Panc1 (cell line): ENCODE measurements at regions of chr12 and their contacts with region 1.

Region 1: DNA sequence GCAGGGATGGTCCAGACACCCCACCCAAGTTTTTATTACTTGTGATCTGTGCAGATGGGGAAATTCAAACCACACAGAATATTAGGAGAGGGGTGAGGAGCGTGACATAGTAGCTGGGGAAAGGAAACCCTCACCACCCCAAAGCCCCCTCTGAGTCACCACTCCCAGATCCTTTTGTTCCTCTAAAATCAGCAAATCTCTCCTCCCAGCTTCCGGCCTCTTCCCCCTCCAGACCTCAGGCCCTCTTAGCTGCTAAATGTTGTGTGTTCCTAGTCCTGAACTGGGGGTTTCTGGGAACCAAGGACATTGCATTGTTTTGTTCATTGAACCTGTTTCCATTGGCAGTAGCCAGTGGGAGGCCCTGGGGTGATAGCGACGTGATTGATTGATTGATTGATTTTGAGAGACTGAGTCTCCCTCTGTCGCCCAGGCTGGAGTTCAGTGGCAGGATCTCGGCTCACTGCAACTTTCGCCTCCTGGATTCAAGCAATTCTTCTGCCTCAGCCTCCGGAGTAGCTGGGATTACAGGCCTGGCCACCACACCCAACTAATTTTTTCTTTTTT is 5.9 kb upstream of the ORAI1 start:
- DNase-seq: no peak
- ATAC-seq: no peak
- H3K4me3 ChIP-seq: no peak overlapping the region
- H3K27ac ChIP-seq: no peak overlapping the region
- H3K4me1 ChIP-seq: peaks cover 5% of the 10 kb centered on the region; the same call in 1 of the 2 replicates
- H3K27me3 ChIP-seq: no peaks in the 10 kb centered on the region
- CTCF ChIP-seq: no peak

Region 2: GRCh38 chr12:121499929-121500793 is 120.2 kb before region 1 on chr12:
- CTCF ChIA-PET with region 1: no interaction called
- POLR2A ChIA-PET with region 1: no interaction called
- in situ Hi-C with region 1: no loop called
- intact Hi-C with region 1: loop called (anchors 5 kb)
- DNase-seq: no peak
- ATAC-seq: peak; percentile 95
- H3K4me3 ChIP-seq: no peak overlapping the region
- H3K27ac ChIP-seq: no peak overlapping the region
- H3K4me1 ChIP-seq: no peaks in the 10 kb centered on the region
- H3K27me3 ChIP-seq: no peaks in the 10 kb centered on the region
- CTCF ChIP-seq: peak; percentile 96

Region 3: GRCh38 chr12:121560392-121561008 is 59.9 kb before region 1 on chr12:
- CTCF ChIA-PET with region 1: interaction called, 8 read pairs
- POLR2A ChIA-PET with region 1: interaction called, 13 read pairs
- in situ Hi-C with region 1: no loop called
- intact Hi-C with region 1: loop called (anchors 10 kb)
- DNase-seq: no peak
- ATAC-seq: 0 out of 2 replicates have a peak, but pooled peaks have one; percentile 42
- H3K4me3 ChIP-seq: no peak overlapping the region
- H3K27ac ChIP-seq: no peak overlapping the region
- H3K4me1 ChIP-seq: no peaks in the 10 kb centered on the region
- H3K27me3 ChIP-seq: no peaks in the 10 kb centered on the region
- CTCF ChIP-seq: no peak

Region 4: DNA sequence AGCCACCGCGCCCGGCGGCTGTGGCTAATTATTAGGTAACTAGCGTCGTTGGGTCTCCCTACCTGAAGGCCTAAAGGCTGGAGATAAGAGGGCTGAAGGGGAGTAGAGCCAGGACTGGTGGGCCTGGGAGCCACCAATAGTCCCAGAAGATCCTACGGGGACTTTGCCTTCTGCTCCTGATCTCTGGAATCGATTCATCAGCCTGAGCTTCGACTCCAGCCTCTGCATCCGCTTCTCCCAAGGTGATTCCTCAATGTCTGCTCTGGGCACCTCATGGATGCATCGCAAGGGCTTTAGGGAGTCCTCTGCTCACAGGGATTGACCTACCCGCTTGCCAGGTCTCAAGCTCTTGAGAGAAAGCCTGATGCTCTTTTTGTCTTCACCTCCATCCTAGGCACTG is 24.9 kb before region 1 on chr12:
- CTCF ChIA-PET with region 1: interaction called, 11 read pairs
- POLR2A ChIA-PET with region 1: no interaction called
- in situ Hi-C with region 1: no loop called
- intact Hi-C with region 1: no loop called
- DNase-seq: no peak
- ATAC-seq: no peak
- H3K4me3 ChIP-seq: no peak overlapping the region
- H3K27ac ChIP-seq: no peak overlapping the region
- H3K4me1 ChIP-seq: 0 out of 2 replicates have a peak, but pooled peaks cover under 1% of the 10 kb centered on the region
- H3K27me3 ChIP-seq: no peaks in the 10 kb centered on the region
- CTCF ChIP-seq: no peak